ENCODE measurements at regions of chr1 and their contacts with region 1.

Region 1: DNA sequence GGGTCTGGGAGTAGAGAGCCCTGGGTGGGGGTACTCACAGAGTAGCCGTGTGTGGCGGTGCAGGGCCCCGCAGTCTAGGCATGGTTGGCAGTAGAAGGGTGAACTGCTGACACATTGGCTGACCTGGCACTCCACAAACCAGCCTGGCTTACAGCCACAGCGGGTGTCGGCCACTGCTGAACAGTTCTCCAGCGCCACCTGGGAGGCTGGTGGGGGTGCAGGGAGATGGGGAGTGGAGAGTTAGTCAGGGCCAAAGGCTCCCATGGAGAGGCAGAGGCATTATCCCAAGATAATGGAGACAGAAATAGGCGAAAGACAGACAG is 1.5 kb downstream of the TNFRSF25 start:
- DNase-seq: peak; percentile 83
- H3K4me3 Mint-ChIP-seq: peak overlapping the region; percentile 82
- H3K27ac Mint-ChIP-seq: peak overlapping the region; percentile 83
- H3K4me1 Mint-ChIP-seq: peaks cover 54% of the 10 kb centered on the region
- H3K27me3 Mint-ChIP-seq: no peaks in the 10 kb centered on the region

Region 2: DNA sequence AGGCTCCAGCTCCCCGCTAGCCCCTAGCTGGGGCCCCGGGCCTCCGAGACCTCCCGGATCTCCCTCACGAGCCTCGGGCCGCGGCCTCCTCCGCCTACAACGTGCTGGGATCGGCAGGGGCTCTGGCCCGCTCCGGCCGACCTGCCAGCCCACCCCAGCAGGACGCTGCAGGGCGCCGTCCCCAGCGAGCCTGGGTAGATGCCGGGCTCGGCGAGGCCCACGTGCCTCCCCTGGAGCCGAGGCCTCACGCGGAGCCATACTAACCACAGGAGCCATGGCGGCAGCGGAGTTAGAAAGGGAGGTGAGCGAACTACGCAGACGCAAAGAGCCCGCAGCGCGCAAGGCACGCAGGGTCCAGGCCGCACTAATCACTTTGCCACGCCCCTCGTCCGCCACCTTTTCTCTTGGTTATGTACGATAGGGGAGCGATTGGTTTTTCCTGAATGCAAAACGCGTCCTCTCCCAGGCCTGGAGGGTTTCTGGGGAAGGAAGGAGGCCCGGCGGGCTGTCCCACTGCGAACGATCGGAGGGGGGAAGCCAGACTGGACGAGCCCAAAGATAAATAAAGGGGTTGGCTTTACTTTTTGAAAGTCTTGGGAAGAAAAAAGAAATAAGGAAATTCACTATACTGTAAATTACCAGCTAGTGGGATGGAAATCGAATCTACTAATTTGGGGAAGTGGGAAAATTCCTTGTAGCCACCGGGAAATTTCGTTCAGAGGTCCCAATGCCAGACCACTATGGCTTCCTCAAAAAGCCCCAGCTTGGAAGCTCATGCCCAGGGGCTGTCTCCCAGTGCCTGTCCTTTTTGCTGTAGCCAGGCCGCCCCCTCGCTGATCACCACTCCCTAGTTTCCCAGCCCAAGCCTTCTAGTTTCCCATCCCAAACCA is 264.9 kb before region 1 on chr1 and contains the start of gene RPL22:
- CTCF ChIA-PET with region 1: no interaction called
- POLR2A ChIA-PET with region 1: no interaction called
- intact Hi-C with region 1: loop called (anchors 5 kb)
- DNase-seq: peak; percentile 99
- H3K4me3 Mint-ChIP-seq: peak within 1 kb of the TSS; percentile 90
- H3K27ac Mint-ChIP-seq: peak within 1 kb of the TSS; percentile 91
- H3K4me1 Mint-ChIP-seq: peaks cover 39% of the 10 kb centered on the region
- H3K27me3 Mint-ChIP-seq: no peaks in the 10 kb centered on the region
- total RNA-seq, gene RPL22: 395 to 433 TPM

Region 3: GRCh38 chr1:6260961-6261614 is 203.4 kb before region 1 on chr1 and contains the start of gene GPR153:
- CTCF ChIA-PET with region 1: no interaction called
- POLR2A ChIA-PET with region 1: no interaction called
- intact Hi-C with region 1: no loop called
- DNase-seq: peak; percentile 47
- H3K4me3 Mint-ChIP-seq: peak within 1 kb of the TSS; percentile 35
- H3K27ac Mint-ChIP-seq: no peak within 1 kb of the TSS
- H3K4me1 Mint-ChIP-seq: peaks cover 6% of the 10 kb centered on the region
- H3K27me3 Mint-ChIP-seq: peaks cover 17% of the 10 kb centered on the region
- total RNA-seq, gene GPR153: 0.17 to 0.26 TPM

Region 4: GRCh38 chr1:6423321-6423999 is 41.0 kb before region 1 on chr1:
- CTCF ChIA-PET with region 1: interaction called, 14 read pairs
- POLR2A ChIA-PET with region 1: no interaction called
- intact Hi-C with region 1: no loop called
- DNase-seq: peak; percentile 83
- H3K4me3 Mint-ChIP-seq: peak overlapping the region; percentile 20
- H3K27ac Mint-ChIP-seq: no peak overlapping the region
- H3K4me1 Mint-ChIP-seq: peaks cover 17% of the 10 kb centered on the region
- H3K27me3 Mint-ChIP-seq: peaks cover 41% of the 10 kb centered on the region

Region 5: DNA sequence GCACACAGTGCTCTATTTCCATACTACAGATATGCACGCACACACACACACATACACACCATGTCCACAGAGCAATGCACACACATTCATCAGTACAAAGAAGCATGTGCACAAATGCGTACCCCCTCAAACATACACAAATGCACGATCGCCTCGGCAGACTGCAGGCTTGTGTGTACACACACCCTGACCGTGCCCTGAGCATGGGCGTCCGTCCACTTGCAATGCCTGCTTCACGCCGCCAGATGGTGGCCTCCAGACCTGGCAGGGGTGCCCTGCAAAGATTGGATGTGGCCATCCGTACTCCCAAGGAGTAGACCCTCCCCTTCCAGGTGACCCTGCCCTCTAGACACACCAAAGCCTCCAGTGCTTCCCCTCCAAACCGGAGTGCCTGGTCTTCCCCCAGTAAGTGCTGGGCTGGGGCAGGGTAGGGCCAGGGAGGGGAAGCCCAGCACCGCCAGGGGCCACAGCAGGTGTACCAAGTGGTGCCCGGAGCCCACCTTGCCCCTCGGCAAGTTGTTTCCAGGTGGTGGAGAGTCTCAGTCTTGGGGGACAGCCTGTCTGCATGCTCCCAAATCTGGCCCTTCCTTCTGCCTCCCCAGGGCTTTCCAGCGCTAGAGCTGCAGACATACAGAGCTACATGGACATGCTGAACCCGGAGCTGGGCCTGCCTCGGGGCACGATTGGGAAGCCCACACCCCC is 19.3 kb before region 1 on chr1:
- CTCF ChIA-PET with region 1: interaction called, 22 read pairs
- POLR2A ChIA-PET with region 1: interaction called, 5 read pairs
- intact Hi-C with region 1: no loop called
- DNase-seq: peak; percentile 66
- H3K4me3 Mint-ChIP-seq: no peak overlapping the region
- H3K27ac Mint-ChIP-seq: no peak overlapping the region
- H3K4me1 Mint-ChIP-seq: peaks cover 20% of the 10 kb centered on the region
- H3K27me3 Mint-ChIP-seq: peaks cover 33% of the 10 kb centered on the region

Region 6: DNA sequence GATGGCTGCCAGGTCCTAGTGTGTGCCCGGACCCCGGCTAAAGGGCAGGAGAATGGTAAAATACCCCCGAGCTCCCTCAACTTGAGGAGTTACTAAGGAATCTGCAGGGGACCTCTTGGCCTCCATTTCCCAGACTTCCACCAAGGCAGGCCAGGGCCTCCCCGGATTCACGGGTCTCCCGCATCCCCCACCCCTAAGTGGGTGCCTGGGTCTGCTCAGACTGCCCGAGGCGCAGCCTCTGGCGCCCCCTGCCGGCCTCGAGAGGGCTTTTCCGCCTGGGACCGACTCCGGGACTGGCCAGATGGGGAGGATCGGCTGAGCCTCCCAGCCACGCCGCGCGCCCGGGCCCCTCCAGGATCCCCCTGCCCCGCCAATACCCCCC is 25.3 kb after region 1 on chr1:
- CTCF ChIA-PET with region 1: interaction called, 13 read pairs
- POLR2A ChIA-PET with region 1: interaction called, 3 read pairs
- intact Hi-C with region 1: loop called (anchors 1 kb)
- DNase-seq: peak; percentile 87
- H3K4me3 Mint-ChIP-seq: peak overlapping the region; percentile 74
- H3K27ac Mint-ChIP-seq: peak overlapping the region; percentile 42
- H3K4me1 Mint-ChIP-seq: peaks cover 21% of the 10 kb centered on the region
- H3K27me3 Mint-ChIP-seq: peaks cover 8% of the 10 kb centered on the region